AG04449 (cell line): ENCODE measurements at regions of chr2 and their contacts with region 1.

Region 1: GRCh38 chr2:174546581-174547506 is 50.8 kb downstream of the WIPF1 start:
- DNase-seq: no peak
- H3K4me3 ChIP-seq: no peak overlapping the region
- CTCF ChIP-seq: peak; percentile 74

Region 2: GRCh38 chr2:174117951-174118930 is 428.6 kb before region 1 on chr2:
- CTCF ChIA-PET with region 1: no interaction called
- POLR2A ChIA-PET with region 1: no interaction called
- DNase-seq: peak; percentile 56
- H3K4me3 ChIP-seq: no peak overlapping the region
- CTCF ChIP-seq: no peak

Region 3: GRCh38 chr2:174353004-174353403 is 193.8 kb before region 1 on chr2:
- CTCF ChIA-PET with region 1: no interaction called
- POLR2A ChIA-PET with region 1: no interaction called
- DNase-seq: no peak
- H3K4me3 ChIP-seq: no peak overlapping the region
- CTCF ChIP-seq: no peak

Region 4: DNA sequence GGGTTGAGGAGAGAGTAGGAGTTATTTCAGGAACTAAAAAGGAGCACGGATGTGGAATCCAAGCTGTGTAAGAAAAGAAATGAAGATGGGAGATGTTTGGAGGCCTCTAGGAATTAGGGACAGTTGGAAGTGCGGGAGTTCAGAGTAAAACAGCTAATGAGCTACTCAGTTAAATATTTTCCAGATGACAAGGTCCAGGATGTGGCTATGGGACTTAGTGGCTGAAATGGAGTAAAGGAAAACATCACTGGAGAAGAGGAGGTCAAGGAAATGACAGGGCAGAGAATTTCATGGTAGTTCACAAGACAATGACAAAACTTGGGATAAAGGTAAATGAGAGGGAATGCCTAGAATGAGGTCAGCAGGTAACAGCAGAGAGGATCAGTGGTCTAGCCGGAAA is 73.0 kb before region 1 on chr2:
- CTCF ChIA-PET with region 1: interaction called, 19 read pairs
- POLR2A ChIA-PET with region 1: no interaction called
- DNase-seq: no peak
- H3K4me3 ChIP-seq: no peak overlapping the region
- CTCF ChIP-seq: no peak

Region 5: GRCh38 chr2:174487108-174487819 is 59.6 kb before region 1 on chr2:
- CTCF ChIA-PET with region 1: interaction called, 10 read pairs
- POLR2A ChIA-PET with region 1: no interaction called
- DNase-seq: peak; percentile 86
- H3K4me3 ChIP-seq: peak overlapping the region; percentile 95
- CTCF ChIP-seq: no peak

Region 6: DNA sequence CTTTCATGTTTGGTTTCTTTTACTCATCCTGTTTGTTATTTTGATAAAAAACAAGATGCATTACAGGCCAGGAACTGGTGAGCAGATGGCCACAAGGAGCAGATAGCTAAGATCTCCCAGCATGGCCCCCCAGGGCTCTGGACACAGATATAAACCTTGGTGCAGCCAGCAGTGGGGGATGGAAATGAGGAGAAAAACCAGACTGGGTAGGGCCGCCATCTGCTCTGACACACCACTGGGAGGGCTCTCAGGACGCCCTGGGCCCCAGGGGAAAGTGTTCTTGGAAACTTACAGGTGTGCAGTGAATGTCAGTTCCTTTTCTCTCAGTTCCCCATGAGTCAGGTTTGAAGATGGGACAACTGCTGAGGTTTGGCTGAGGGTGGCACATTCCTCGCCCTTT is 10.5 kb before region 1 on chr2:
- CTCF ChIA-PET with region 1: interaction called, 19 read pairs
- POLR2A ChIA-PET with region 1: no interaction called
- DNase-seq: no peak
- H3K4me3 ChIP-seq: no peak overlapping the region
- CTCF ChIP-seq: no peak